Natural killer cell (primary cell): ENCODE measurements at regions of chr18 and their contacts with region 1.

Region 1: DNA sequence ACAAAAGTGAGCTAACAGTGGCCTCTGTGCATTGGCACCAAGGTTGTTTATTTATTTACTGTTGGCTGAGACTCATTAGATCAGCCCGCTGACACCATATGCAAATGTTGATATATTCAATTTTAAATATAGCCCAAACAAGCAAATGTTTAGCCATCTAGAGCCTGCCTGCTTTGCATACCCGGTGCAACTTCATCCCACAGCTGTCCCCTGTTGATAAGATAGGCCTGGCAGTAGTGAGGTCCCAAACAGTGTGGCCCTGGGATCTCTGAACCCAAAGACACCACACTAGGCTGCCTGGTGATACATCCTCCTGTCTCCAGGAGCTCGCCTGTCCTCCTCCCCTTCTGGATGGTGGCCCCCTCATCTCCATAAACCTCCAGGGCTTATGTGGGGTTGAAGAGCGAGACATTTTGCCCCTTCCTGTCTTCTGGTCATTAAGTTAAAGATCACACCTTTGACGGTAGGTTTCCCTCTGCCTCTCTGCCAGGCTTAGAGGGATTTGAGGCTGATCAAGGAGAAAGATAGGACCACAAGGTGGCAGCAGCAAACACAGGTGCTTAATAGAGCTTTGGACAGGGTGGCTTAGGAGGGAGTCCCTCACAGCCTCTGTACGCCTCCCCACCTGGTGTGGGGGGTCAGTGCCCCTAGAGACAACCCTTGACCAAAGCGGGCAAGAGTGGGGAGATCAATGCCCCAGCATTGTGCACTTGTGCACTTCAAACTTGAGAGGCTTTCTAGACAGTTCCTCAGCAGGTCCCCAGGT is 23.7 kb upstream of the MYO5B start:
- DNase-seq: peak in 1 of 2 donors; percentile 69
- ATAC-seq: peak in 2 of 3 donors; percentile 41 to 54
- H3K4me3 ChIP-seq: no peak overlapping the region
- H3K4me3 Mint-ChIP-seq: no peak overlapping the region
- H3K27ac ChIP-seq: no peak overlapping the region
- H3K27ac Mint-ChIP-seq: no peak overlapping the region
- H3K4me1 ChIP-seq: no peaks in the 10 kb centered on the region
- H3K4me1 Mint-ChIP-seq: no peaks in the 10 kb centered on the region
- H3K27me3 ChIP-seq: no peaks in the 10 kb centered on the region
- H3K27me3 Mint-ChIP-seq: peaks cover 32 to 63% of the 10 kb centered on the region in 2 donors
- CTCF ChIP-seq: no peak

Region 2: GRCh38 chr18:49393011-49393410 is 825.6 kb before region 1 on chr18:
- intact Hi-C with region 1: no loop called
- DNase-seq: no peak
- ATAC-seq: no peak
- H3K4me3 ChIP-seq: no peak overlapping the region
- H3K4me3 Mint-ChIP-seq: no peak overlapping the region
- H3K27ac ChIP-seq: no peak overlapping the region
- H3K27ac Mint-ChIP-seq: no peak overlapping the region
- H3K4me1 ChIP-seq: no peaks in the 10 kb centered on the region
- H3K4me1 Mint-ChIP-seq: peaks cover 14 to 23% of the 10 kb centered on the region in 2 donors
- H3K27me3 ChIP-seq: no peaks in the 10 kb centered on the region
- H3K27me3 Mint-ChIP-seq: no peaks in the 10 kb centered on the region
- CTCF ChIP-seq: no peak

Region 3: GRCh38 chr18:50356036-50356945 is 137.7 kb after region 1 on chr18:
- intact Hi-C with region 1: loop called (anchors 1 kb)
- DNase-seq: peak in 1 of 2 donors; percentile 31
- ATAC-seq: peak in 2 of 3 donors; percentile 25 to 54
- H3K4me3 ChIP-seq: no peak overlapping the region
- H3K4me3 Mint-ChIP-seq: no peak overlapping the region
- H3K27ac ChIP-seq: no peak overlapping the region
- H3K27ac Mint-ChIP-seq: peak overlapping the region in 1 of 2 donors; percentile 14
- H3K4me1 ChIP-seq: peaks cover 6% of the 10 kb centered on the region
- H3K4me1 Mint-ChIP-seq: peaks cover 5 to 7% of the 10 kb centered on the region in 2 donors
- H3K27me3 ChIP-seq: peaks cover 2% of the 10 kb centered on the region
- H3K27me3 Mint-ChIP-seq: peaks cover 12 to 36% of the 10 kb centered on the region in 2 donors
- CTCF ChIP-seq: no peak